Psoas muscle (tissue), 8 donors: ENCODE measurements at regions of chr4 and their contacts with region 1.

Region 1: GRCh38 chr4:128315477-128316137 is 28.0 kb upstream of the PGRMC2 start:
- DNase-seq: no peak
- ATAC-seq: no peak
- H3K4me3 ChIP-seq: no peak overlapping the region
- H3K27ac ChIP-seq: no peak overlapping the region
- H3K4me1 ChIP-seq: no peaks in the 10 kb centered on the region
- H3K27me3 ChIP-seq: no peaks in the 10 kb centered on the region
- CTCF ChIP-seq: no peak

Region 2: GRCh38 chr4:127856813-127857447 is 458.7 kb before region 1 on chr4:
- intact Hi-C with region 1: no loop called
- DNase-seq: no peak
- ATAC-seq: peak in 1 of 4 donors; percentile 71
- H3K4me3 ChIP-seq: no peak overlapping the region
- H3K27ac ChIP-seq: no peak overlapping the region
- H3K4me1 ChIP-seq: no peaks in the 10 kb centered on the region
- H3K27me3 ChIP-seq: no peaks in the 10 kb centered on the region
- CTCF ChIP-seq: no peak

Region 3: DNA sequence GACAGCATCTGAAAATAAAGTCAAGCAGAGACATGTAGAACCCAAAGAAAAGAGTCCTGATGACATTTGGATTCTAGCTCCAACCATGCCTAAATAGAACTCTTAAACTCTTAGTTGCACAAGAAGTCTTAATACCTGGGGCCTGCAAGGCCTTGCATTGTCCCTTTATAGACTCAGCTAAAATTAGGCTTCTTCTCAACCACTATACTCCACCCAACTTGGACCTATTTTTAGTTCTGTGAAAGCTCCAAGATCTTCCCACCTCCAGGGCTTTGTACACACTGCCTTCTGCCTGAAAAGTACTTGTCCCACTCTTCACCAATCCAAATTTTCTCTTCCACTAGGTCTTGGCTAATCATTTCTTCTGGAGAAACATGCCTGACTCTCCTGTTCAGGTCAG is 398.5 kb before region 1 on chr4:
- intact Hi-C with region 1: no loop called
- DNase-seq: no peak
- ATAC-seq: peak; percentile 69 to 97 (median 88)
- H3K4me3 ChIP-seq: no peak overlapping the region
- H3K27ac ChIP-seq: no peak overlapping the region
- H3K4me1 ChIP-seq: peaks cover 9% of the 10 kb centered on the region
- H3K27me3 ChIP-seq: no peaks in the 10 kb centered on the region
- CTCF ChIP-seq: no peak

Region 4: GRCh38 chr4:128354205-128354821 is 38.7 kb after region 1 on chr4:
- intact Hi-C with region 1: loop called in 1 of 2 experiments (anchors 5 kb)
- DNase-seq: no peak
- ATAC-seq: no peak
- H3K4me3 ChIP-seq: no peak overlapping the region
- H3K27ac ChIP-seq: no peak overlapping the region
- H3K4me1 ChIP-seq: peaks cover 19% of the 10 kb centered on the region
- H3K27me3 ChIP-seq: no peaks in the 10 kb centered on the region
- CTCF ChIP-seq: no peak

Region 5: GRCh38 chr4:128440923-128441322 is 125.3 kb after region 1 on chr4:
- intact Hi-C with region 1: no loop called
- DNase-seq: no peak
- ATAC-seq: no peak
- H3K4me3 ChIP-seq: no peak overlapping the region
- H3K27ac ChIP-seq: no peak overlapping the region
- H3K4me1 ChIP-seq: no peaks in the 10 kb centered on the region
- H3K27me3 ChIP-seq: no peaks in the 10 kb centered on the region
- CTCF ChIP-seq: no peak

Region 6: GRCh38 chr4:128980873-128981272 is 665.3 kb after region 1 on chr4:
- intact Hi-C with region 1: no loop called
- DNase-seq: no peak
- ATAC-seq: no peak
- H3K4me3 ChIP-seq: no peak overlapping the region
- H3K27ac ChIP-seq: no peak overlapping the region
- H3K4me1 ChIP-seq: no peaks in the 10 kb centered on the region
- H3K27me3 ChIP-seq: no peaks in the 10 kb centered on the region
- CTCF ChIP-seq: no peak